ENCODE measurements at regions of chr12 and their contacts with region 1.

Region 1: DNA sequence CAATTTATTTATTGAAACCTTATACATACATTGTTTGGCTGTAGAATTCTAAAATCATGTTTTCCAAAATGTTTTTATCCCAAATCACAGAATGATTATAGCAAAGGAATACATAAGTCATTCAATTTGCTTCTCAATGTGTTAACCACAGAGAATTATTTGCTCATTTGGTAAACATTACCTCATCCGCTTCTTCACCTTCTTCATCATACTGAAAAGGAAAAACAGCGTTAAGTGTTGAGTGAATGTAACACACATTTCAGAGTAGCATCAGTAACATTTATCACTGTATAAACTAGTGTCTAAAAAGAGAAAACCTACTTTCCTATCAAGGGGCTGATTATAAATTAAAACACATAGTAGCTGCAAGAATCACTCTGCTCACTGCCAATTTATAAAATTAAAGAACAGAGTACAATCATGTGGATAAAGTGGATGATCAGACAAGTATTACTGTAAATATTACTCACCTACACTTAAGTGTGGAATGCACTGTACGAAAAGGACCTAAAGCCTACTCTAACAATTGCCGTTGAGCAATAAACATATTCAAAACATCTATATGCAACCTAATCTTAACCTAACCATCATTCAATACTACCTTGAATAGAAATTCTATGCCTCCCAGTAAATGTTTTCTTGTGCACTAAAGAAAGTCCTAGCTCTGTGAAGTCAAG is 18.1 kb upstream of the PHLDA1 start:
- DNase-seq: no peak
- H3K4me3 ChIP-seq: no peak overlapping the region
- H3K27ac ChIP-seq: no peak overlapping the region
- H3K4me1 ChIP-seq: no peaks in the 10 kb centered on the region
- H3K27me3 ChIP-seq: no peaks in the 10 kb centered on the region

Region 2: DNA sequence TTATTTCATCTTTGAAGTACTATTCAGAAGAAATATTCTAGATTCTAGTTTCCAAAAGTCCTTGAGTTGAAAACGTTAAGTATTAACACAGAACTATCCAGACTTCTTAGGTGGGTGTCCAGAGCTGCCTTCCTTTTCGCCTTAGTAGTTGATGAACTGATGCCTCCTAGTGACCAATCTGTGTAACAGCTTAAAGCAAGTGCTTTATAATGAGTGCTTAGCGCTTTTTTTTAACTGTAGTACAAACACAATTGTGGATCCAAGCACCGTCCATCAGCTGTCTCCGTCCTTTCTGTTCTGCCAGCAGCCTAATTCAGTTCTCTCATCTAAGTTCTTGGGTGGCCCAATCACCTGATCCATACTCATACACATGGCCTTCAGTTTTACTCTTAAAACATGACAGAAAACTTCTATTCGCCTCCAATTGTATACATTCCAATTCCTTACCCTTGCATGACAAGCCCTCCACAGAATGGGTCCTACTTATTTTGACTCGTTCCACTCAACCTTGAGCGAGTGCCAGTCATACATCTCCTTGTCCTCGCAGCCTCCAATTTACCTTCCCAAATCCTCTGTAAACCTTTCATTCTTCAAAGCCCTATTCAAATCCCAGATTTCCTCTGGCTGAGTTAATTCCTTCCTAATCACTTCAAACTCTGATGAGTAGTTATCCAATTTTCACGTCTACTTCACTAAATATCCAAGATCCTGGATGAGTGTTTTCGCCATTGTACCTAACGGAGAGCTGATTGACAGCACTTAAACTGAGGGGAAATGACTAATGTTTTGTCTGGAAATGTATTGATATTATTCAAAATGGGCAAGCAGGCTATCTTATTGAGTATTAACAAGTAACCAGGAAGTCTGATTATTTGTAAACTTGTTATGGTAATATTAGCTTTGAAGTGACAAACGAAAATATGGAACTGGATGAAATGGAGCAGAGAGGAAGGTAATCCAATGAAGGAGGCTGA is 12.3 kb before region 1 on chr12:
- CTCF ChIA-PET with region 1: interaction called, 10 read pairs
- POLR2A ChIA-PET with region 1: no interaction called
- DNase-seq: peak; percentile 81 to 90 (median 88)
- H3K4me3 ChIP-seq: no peak overlapping the region
- H3K27ac ChIP-seq: no peak overlapping the region
- H3K4me1 ChIP-seq: peaks cover 0 to 9% (median 5%) of the 10 kb centered on the region in 4 experiments
- H3K27me3 ChIP-seq: peaks cover 5 to 18% (median 8%) of the 10 kb centered on the region in 5 experiments

Region 3: GRCh38 chr12:76375470-76375869 is 325.8 kb after region 1 on chr12:
- CTCF ChIA-PET with region 1: no interaction called
- POLR2A ChIA-PET with region 1: no interaction called
- DNase-seq: no peak
- H3K4me3 ChIP-seq: no peak overlapping the region
- H3K27ac ChIP-seq: no peak overlapping the region
- H3K4me1 ChIP-seq: no peaks in the 10 kb centered on the region
- H3K27me3 ChIP-seq: no peaks in the 10 kb centered on the region

Measured in common myeloid progenitor, CD34-positive (primary cell).